IMR-90 (cell line): ENCODE measurements at regions of chrX and their contacts with region 1.

Region 1: GRCh38 chrX:69222103-69223090 is 57.1 kb upstream of the PJA1 start:
- DNase-seq: peak; percentile 53
- ATAC-seq: peak; percentile 79
- H3K4me3 ChIP-seq: no peak overlapping the region
- H3K27ac ChIP-seq: no peak overlapping the region
- H3K4me1 ChIP-seq: peaks cover 2% of the 10 kb centered on the region; the same call in 1 of the 2 replicates
- H3K27me3 ChIP-seq: peaks cover 27% of the 10 kb centered on the region
- CTCF ChIP-seq: peak; percentile 79
- POLR2A ChIP-seq: no peak
- RAD21 ChIP-seq: peak; percentile 86

Region 2: GRCh38 chrX:68989865-68990606 is 232.4 kb before region 1 on chrX:
- CTCF ChIA-PET with region 1: no interaction called
- POLR2A ChIA-PET with region 1: no interaction called
- dilution Hi-C with region 1: no loop called
- in situ Hi-C with region 1: no loop called
- intact Hi-C with region 1: loop called (anchors 10 kb)
- DNase-seq: peak; percentile 82
- ATAC-seq: peak; percentile 93
- H3K4me3 ChIP-seq: no peak overlapping the region
- H3K27ac ChIP-seq: peak overlapping the region; percentile 53; the same call in 1 of the 2 replicates
- H3K4me1 ChIP-seq: peaks cover 10% of the 10 kb centered on the region
- H3K27me3 ChIP-seq: peaks cover 11% of the 10 kb centered on the region; the same call in 1 of the 2 replicates
- CTCF ChIP-seq: no peak
- POLR2A ChIP-seq: no peak
- RAD21 ChIP-seq: no peak

Region 3: DNA sequence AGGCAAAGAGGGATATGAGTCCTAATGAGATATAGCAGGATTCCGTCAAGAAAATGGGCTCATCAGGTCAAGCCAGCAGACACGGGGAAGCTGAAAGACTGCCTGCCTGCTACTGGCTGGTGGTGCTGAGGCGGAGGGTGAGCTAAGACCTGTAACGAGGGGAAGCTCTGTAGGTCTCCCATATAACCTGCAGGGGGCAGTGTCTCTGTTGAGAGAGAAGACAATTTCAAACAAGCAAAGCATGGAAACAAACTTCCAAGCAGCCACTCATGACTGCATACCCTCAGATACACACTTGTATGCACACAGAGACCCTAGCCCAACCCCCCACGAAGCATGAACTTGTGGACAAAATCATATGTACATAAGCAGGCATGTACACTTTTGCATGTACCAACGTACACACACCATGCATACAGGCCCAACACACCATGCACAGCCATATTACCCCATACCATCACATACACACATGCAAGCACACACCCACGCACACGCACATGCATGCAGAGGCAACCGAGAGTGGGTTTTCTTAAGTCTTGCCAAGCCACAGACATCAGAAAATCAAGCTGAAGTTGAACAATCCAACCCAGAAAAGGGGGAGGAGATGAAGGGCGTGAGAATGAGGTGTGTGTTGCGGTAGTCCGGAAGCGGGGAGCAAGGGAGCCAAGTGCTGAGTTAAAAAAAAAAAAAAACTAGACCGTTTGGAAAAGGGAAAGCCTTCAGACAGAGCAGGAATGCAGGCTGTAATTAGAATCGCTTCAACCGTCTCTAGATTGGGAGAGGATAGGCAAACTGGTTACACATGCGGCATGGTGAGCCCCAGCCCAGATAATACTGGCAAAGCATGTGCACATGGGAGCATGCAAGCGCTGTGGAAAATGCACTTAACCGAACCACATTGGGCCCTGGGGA is 128.2 kb before region 1 on chrX:
- CTCF ChIA-PET with region 1: interaction called, 3 read pairs
- POLR2A ChIA-PET with region 1: no interaction called
- dilution Hi-C with region 1: no loop called
- in situ Hi-C with region 1: no loop called
- intact Hi-C with region 1: loop called (anchors 1 kb)
- DNase-seq: peak; percentile 60
- ATAC-seq: peak; percentile 82
- H3K4me3 ChIP-seq: no peak overlapping the region
- H3K27ac ChIP-seq: no peak overlapping the region
- H3K4me1 ChIP-seq: no peaks in the 10 kb centered on the region
- H3K27me3 ChIP-seq: peaks cover 28% of the 10 kb centered on the region
- CTCF ChIP-seq: peak; percentile 50
- POLR2A ChIP-seq: no peak
- RAD21 ChIP-seq: peak; percentile 50

Region 4: GRCh38 chrX:69133921-69134542 is 88.4 kb before region 1 on chrX:
- CTCF ChIA-PET with region 1: no interaction called
- POLR2A ChIA-PET with region 1: no interaction called
- dilution Hi-C with region 1: no loop called
- in situ Hi-C with region 1: no loop called
- intact Hi-C with region 1: loop called (anchors 10 kb)
- DNase-seq: peak; percentile 69
- ATAC-seq: peak; percentile 73
- H3K4me3 ChIP-seq: no peak overlapping the region
- H3K27ac ChIP-seq: no peak overlapping the region
- H3K4me1 ChIP-seq: peaks cover 13% of the 10 kb centered on the region
- H3K27me3 ChIP-seq: peaks cover 22% of the 10 kb centered on the region; the same call in 1 of the 2 replicates
- CTCF ChIP-seq: peak; percentile 55
- POLR2A ChIP-seq: no peak
- RAD21 ChIP-seq: peak; percentile 45

Region 5: GRCh38 chrX:69387567-69388487 is 165.4 kb after region 1 on chrX:
- CTCF ChIA-PET with region 1: no interaction called
- POLR2A ChIA-PET with region 1: no interaction called
- dilution Hi-C with region 1: no loop called
- in situ Hi-C with region 1: no loop called
- intact Hi-C with region 1: loop called (anchors 10 kb)
- DNase-seq: peak; percentile 21
- ATAC-seq: peak; percentile 85
- H3K4me3 ChIP-seq: no peak overlapping the region
- H3K27ac ChIP-seq: no peak overlapping the region
- H3K4me1 ChIP-seq: no peaks in the 10 kb centered on the region
- H3K27me3 ChIP-seq: peaks cover 56% of the 10 kb centered on the region
- CTCF ChIP-seq: peak; percentile 66
- POLR2A ChIP-seq: no peak
- RAD21 ChIP-seq: peak; percentile 72